Mucosa of descending colon (tissue), 3 donors: ENCODE measurements at regions of chr1 and their contacts with region 1.

Region 1: GRCh38 chr1:66331657-66332547 is 202.1 kb upstream of the SGIP1 start:
- DNase-seq: peak; percentile 62 to 68 (median 66)
- ATAC-seq: peak; percentile 67
- H3K4me3 ChIP-seq: peak overlapping the region; percentile 14
- H3K4me1 ChIP-seq: peaks cover 12% of the 10 kb centered on the region
- CTCF ChIP-seq: no peak

Region 2: GRCh38 chr1:66262211-66262963 is 69.5 kb before region 1 on chr1:
- intact Hi-C with region 1: loop called in 1 of 2 experiments (anchors 5 kb)
- DNase-seq: no peak
- ATAC-seq: peak; percentile 80
- H3K4me3 ChIP-seq: no peak overlapping the region
- H3K4me1 ChIP-seq: peaks cover 8% of the 10 kb centered on the region
- CTCF ChIP-seq: no peak

Region 3: GRCh38 chr1:66271216-66271903 is 60.5 kb before region 1 on chr1:
- intact Hi-C with region 1: loop called in 1 of 2 experiments (anchors 5 kb)
- DNase-seq: peak; percentile 45 to 87 (median 54)
- ATAC-seq: peak; percentile 87
- H3K4me3 ChIP-seq: no peak overlapping the region
- H3K4me1 ChIP-seq: peaks cover 6% of the 10 kb centered on the region
- CTCF ChIP-seq: no peak